HEK293T (cell line): ENCODE measurements at regions of chr19 and their contacts with region 1.

Region 1: DNA sequence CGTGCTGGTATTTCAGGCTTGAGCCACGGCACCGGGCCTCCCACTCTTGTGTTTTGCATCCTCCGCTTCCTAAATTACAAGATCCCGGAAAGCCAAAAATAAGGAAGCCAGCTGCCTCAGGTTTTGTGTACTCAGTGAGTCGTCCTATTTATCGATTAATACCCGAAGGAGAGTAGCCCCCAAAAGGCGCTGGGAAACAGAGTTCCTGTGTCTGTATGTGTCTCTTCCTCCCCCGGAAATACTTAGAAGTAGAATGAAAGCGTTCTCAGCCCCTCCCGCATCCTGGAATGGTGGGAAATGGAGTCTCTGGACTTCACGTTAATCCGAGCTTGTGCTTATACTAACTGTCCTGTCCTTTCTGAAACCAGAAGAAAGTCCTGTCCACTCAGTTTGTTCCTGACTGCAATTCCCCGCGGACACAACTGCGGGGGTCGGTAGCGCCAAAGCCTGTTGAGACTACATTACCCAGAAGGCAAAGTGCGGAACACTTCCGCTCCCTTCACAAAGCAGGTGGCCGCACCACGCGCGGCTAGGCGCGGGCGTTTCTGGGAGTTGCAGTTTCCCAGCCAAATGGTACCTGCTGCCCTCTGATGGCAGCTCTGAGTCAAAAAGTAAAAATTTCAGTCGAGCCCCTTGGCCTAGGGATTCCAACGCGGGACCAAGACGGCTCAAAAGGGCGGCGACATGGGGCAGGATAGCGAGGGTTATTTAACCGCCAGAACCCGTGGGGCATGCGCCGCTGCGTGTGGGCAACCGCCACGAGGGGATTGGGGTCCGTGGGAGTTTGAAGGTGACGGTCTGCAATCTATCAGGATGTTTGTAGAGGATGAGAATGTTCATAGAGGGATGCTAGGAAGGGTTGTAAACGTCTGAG is 2.2 kb upstream of the GSK3A start:
- DNase-seq: peak; percentile 78

Region 2: DNA sequence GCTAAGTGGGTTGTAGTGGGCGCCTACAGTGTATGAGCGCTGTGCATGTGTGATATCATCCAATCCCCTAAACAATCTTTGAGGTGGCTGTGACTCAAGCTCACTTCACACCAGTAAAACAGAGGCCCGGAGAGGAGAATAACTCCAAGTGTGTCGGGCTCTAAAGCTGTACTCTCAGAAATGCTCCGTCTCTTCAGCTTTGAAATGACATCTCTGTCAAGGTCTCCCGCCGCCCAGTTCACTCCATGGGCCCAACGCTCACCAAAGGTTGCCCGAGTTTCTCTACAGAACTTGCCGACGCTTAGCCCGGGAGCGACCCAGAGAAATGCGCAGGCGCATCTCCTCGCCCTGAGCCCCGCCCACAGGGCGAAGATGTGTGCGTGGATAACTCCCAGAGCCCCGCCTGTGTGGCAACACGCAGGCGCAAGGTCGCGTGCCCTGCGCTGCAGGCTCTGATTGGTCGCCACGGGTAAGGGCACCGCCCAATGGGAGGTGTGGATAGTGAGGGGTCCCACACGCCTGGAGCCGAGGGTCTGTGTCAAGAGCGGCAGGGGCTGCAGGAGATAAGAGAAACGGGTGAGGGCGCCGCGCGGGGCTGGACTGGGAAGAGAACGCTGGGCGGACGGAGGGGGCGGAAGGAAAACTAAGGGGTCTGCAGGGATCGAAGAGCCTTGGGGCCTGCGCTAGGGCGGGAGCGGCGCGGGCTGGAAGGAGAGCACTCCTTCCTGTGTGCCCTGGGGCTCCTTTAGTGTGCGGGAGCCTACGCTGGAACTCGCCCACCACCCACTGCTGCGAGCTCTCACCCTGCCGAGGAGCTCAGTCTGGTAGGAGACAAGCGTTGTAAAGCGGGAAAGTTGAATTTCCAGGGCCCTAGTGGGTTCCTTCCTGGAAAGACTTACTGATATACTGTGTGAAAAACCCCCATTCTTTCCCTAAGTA is 24.5 kb before region 1 on chr19 and contains the start of gene ZNF526:
- CTCF ChIA-PET with region 1: no interaction called
- POLR2A ChIA-PET with region 1: interaction called, 22 read pairs
- DNase-seq: peak; percentile 99

Region 3: GRCh38 chr19:42226886-42227285 is 17.7 kb before region 1 on chr19:
- CTCF ChIA-PET with region 1: no interaction called
- POLR2A ChIA-PET with region 1: interaction called, 19 read pairs
- DNase-seq: no peak

Region 4: DNA sequence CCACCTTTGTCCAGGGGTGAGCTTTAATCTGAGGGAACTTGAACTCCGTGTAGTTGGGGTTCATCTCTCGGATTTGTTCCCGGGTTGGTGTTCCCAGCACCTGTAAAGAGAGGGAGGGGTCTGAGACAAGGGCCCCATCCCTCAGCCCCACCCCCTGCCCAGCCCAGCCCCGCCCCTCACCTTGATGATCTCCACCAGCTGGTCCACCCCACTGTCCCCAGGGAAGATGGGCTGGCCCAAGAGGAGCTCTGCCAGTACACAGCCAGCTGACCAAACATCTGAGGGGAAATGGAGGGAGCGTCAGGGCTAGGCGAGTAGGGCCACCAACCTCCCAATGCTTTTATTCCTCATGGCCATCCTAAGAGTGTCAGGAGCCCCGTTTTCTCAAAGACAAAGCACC is 11.5 kb before region 1 on chr19:
- CTCF ChIA-PET with region 1: interaction called, 5 read pairs
- POLR2A ChIA-PET with region 1: interaction called, 19 read pairs
- DNase-seq: no peak

Region 5: GRCh38 chr19:42283143-42284065 is 38.8 kb after region 1 on chr19:
- CTCF ChIA-PET with region 1: interaction called, 53 read pairs
- POLR2A ChIA-PET with region 1: interaction called, 140 read pairs
- DNase-seq: peak; percentile 91

Region 6: GRCh38 chr19:42295831-42296525 is 51.4 kb after region 1 on chr19:
- CTCF ChIA-PET with region 1: interaction called, 8 read pairs
- POLR2A ChIA-PET with region 1: interaction called, 10 read pairs
- DNase-seq: peak; percentile 77

Region 7: DNA sequence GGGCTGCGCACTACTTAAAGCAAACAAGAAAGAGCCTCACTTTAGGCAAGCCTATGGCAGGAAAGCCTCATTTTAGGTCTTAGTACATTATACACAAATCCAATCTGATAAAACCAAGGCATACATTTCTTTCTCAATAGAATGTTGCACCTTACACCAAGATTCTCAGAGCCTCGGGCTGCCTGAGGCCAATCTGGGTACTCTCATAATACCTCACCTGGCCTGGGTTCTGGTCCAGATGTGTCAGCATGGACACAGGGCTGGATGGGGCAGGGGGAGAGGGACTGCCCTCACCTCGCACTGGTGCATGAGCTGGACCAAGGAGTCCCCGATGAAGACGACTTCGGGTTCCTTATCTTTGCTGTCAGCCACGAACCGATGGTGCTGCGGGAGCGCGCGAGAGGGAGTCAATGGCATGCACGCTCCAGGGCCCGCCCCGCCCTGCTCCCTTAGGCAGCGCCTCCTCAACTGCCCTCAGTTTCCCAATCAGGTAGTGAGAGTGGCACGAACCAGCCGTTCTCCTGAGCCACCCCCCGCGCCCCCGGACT is 57.1 kb after region 1 on chr19 and contains the start of gene PRR19:
- CTCF ChIA-PET with region 1: interaction called, 8 read pairs
- POLR2A ChIA-PET with region 1: interaction called, 11 read pairs
- DNase-seq: no peak